PC-3 (cell line): ENCODE measurements at regions of chr11 and their contacts with region 1.

Region 1: GRCh38 chr11:129117595-129118350 is 74.4 kb downstream of the ARHGAP32 start:
- DNase-seq: peak; percentile 77
- ATAC-seq: no peak
- H3K4me3 ChIP-seq: no peak overlapping the region
- H3K27ac ChIP-seq: no peak overlapping the region
- H3K4me1 ChIP-seq: peaks cover 27% of the 10 kb centered on the region
- H3K27me3 ChIP-seq: no peaks in the 10 kb centered on the region
- CTCF ChIP-seq: peak; percentile 99

Region 2: GRCh38 chr11:128497061-128497775 is 620.6 kb before region 1 on chr11:
- CTCF ChIA-PET with region 1: no interaction called
- POLR2A ChIA-PET with region 1: no interaction called
- intact Hi-C with region 1: no loop called
- DNase-seq: peak; percentile 97
- ATAC-seq: peak; percentile 74
- H3K4me3 ChIP-seq: peak overlapping the region; percentile 62
- H3K27ac ChIP-seq: peak overlapping the region; percentile 91
- H3K4me1 ChIP-seq: peaks cover 97% of the 10 kb centered on the region
- H3K27me3 ChIP-seq: no peaks in the 10 kb centered on the region
- CTCF ChIP-seq: no peak

Region 3: DNA sequence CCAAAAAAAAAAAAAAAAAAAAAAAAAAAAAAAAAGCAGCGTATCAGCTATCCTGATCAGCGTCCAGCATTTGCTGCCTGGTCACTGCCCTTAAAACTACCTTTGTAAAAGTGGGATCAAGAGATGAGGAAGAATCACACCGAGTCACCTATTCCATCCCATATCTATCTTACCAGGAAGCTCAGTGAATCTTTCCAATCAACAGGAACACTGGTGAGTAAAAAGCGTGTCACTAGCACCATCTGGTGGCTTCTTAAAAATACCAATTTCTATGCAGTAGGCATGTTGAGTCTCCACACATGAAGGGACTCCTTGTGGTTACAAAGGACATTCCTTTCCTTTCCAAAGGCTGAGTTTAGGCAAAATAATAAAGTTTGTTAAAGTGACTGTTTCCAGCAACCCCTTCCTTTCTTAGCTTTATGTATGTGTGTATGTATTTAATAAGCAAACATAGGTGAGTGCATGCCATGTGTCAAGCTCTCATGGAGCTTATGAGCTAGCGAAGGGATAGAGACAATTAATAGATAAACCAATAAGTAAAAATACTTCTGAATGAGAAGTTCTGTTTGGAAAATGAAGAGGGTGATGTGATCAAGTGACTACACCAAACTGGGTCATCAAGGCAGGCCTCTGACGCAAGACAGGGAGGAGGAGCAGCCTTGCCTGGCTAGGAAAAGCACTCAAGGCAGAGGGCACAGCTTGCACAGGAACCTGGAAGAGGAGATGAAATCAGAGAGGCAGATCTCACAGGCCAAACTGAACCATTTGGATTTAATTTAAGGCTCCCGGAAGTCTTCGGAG is 161.2 kb before region 1 on chr11:
- CTCF ChIA-PET with region 1: no interaction called
- POLR2A ChIA-PET with region 1: no interaction called
- intact Hi-C with region 1: loop called (anchors 2 kb)
- DNase-seq: peak; percentile 95
- ATAC-seq: peak; percentile 93
- H3K4me3 ChIP-seq: no peak overlapping the region
- H3K27ac ChIP-seq: no peak overlapping the region
- H3K4me1 ChIP-seq: no peaks in the 10 kb centered on the region
- H3K27me3 ChIP-seq: no peaks in the 10 kb centered on the region
- CTCF ChIP-seq: peak; percentile 94

Region 4: GRCh38 chr11:129143335-129143734 is 25.6 kb after region 1 on chr11:
- CTCF ChIA-PET with region 1: interaction called, 3 read pairs
- POLR2A ChIA-PET with region 1: no interaction called
- intact Hi-C with region 1: loop called (anchors 1 kb)
- DNase-seq: peak; percentile 99
- ATAC-seq: peak; percentile 99
- H3K4me3 ChIP-seq: peak overlapping the region; percentile 52
- H3K27ac ChIP-seq: peak overlapping the region; percentile 93
- H3K4me1 ChIP-seq: peaks cover 57% of the 10 kb centered on the region
- H3K27me3 ChIP-seq: no peaks in the 10 kb centered on the region
- CTCF ChIP-seq: no peak

Region 5: DNA sequence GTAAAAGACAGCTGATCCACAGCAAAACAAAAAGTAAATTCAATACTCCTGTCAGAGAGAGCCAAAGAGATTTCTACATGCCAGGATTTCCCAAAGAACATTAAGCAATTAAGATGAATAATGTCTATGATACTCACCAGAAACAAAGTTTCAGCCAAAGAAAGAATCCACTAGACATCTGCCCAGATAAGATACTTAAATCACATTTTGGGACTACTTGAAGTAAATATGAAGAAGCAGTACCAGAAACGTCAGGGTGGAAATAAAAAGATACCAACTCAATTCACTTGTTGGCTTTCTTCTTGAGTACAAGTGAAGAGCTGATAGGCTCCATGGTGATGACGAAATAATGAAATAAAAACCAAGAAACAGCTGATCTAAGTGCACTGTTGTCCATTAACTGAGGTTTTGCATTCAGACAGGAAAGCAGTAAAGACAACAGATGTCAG is 106.0 kb after region 1 on chr11:
- CTCF ChIA-PET with region 1: no interaction called
- POLR2A ChIA-PET with region 1: no interaction called
- intact Hi-C with region 1: loop called (anchors 2 kb)
- DNase-seq: no peak
- ATAC-seq: no peak
- H3K4me3 ChIP-seq: no peak overlapping the region
- H3K27ac ChIP-seq: no peak overlapping the region; the same call in 1 of the 2 replicates
- H3K4me1 ChIP-seq: peaks cover 21% of the 10 kb centered on the region
- H3K27me3 ChIP-seq: no peaks in the 10 kb centered on the region
- CTCF ChIP-seq: no peak

Region 6: GRCh38 chr11:129279326-129280026 is 161.7 kb after region 1 on chr11:
- CTCF ChIA-PET with region 1: no interaction called
- POLR2A ChIA-PET with region 1: no interaction called
- intact Hi-C with region 1: loop called (anchors 1 kb)
- DNase-seq: peak; percentile 86
- ATAC-seq: peak; percentile 64
- H3K4me3 ChIP-seq: peak overlapping the region; percentile 83
- H3K27ac ChIP-seq: peak overlapping the region; percentile 84
- H3K4me1 ChIP-seq: peaks cover 55% of the 10 kb centered on the region
- H3K27me3 ChIP-seq: no peaks in the 10 kb centered on the region
- CTCF ChIP-seq: no peak

Region 7: GRCh38 chr11:129750349-129751292 is 632.8 kb after region 1 on chr11:
- CTCF ChIA-PET with region 1: no interaction called
- POLR2A ChIA-PET with region 1: no interaction called
- intact Hi-C with region 1: loop called (anchors 1 kb)
- DNase-seq: peak; percentile 89
- ATAC-seq: peak; percentile 97
- H3K4me3 ChIP-seq: peak overlapping the region; percentile 39; the same call in 1 of the 2 replicates
- H3K27ac ChIP-seq: no peak overlapping the region
- H3K4me1 ChIP-seq: peaks cover 5% of the 10 kb centered on the region; the same call in 1 of the 2 replicates
- H3K27me3 ChIP-seq: no peaks in the 10 kb centered on the region
- CTCF ChIP-seq: peak; percentile 98